Heart right ventricle (tissue), 16 donors: ENCODE measurements at regions of chr20 and their contacts with region 1.

Region 1: GRCh38 chr20:25525295-25526266 is 59.8 kb downstream of the NINL start:
- DNase-seq: no peak
- ATAC-seq: peak in 1 of 8 donors; percentile 42
- H3K4me3 ChIP-seq: no peak overlapping the region
- H3K27ac ChIP-seq: no peak overlapping the region
- H3K4me1 ChIP-seq: no peaks in the 10 kb centered on the region
- H3K27me3 ChIP-seq: no peaks in the 10 kb centered on the region
- CTCF ChIP-seq: no peak

Region 2: GRCh38 chr20:24651171-24651975 is 874.2 kb before region 1 on chr20:
- intact Hi-C with region 1: no loop called
- DNase-seq: no peak
- ATAC-seq: no peak
- H3K4me3 ChIP-seq: no peak overlapping the region
- H3K27ac ChIP-seq: no peak overlapping the region
- H3K4me1 ChIP-seq: peaks cover 0 to 8% (median 0%) of the 10 kb centered on the region in 9 donors
- H3K27me3 ChIP-seq: no peaks in the 10 kb centered on the region
- CTCF ChIP-seq: no peak

Region 3: GRCh38 chr20:25481235-25481915 is 44.2 kb before region 1 on chr20:
- intact Hi-C with region 1: no loop called
- DNase-seq: no peak
- ATAC-seq: no peak
- H3K4me3 ChIP-seq: no peak overlapping the region
- H3K27ac ChIP-seq: no peak overlapping the region
- H3K4me1 ChIP-seq: peaks cover 0 to 16% (median 4%) of the 10 kb centered on the region in 9 donors
- H3K27me3 ChIP-seq: no peaks in the 10 kb centered on the region
- CTCF ChIP-seq: no peak

Region 4: GRCh38 chr20:25495189-25495824 is 30.3 kb before region 1 on chr20:
- intact Hi-C with region 1: no loop called
- DNase-seq: no peak
- ATAC-seq: no peak
- H3K4me3 ChIP-seq: no peak overlapping the region
- H3K27ac ChIP-seq: no peak overlapping the region
- H3K4me1 ChIP-seq: no peaks in the 10 kb centered on the region
- H3K27me3 ChIP-seq: no peaks in the 10 kb centered on the region
- CTCF ChIP-seq: no peak

Region 5: DNA sequence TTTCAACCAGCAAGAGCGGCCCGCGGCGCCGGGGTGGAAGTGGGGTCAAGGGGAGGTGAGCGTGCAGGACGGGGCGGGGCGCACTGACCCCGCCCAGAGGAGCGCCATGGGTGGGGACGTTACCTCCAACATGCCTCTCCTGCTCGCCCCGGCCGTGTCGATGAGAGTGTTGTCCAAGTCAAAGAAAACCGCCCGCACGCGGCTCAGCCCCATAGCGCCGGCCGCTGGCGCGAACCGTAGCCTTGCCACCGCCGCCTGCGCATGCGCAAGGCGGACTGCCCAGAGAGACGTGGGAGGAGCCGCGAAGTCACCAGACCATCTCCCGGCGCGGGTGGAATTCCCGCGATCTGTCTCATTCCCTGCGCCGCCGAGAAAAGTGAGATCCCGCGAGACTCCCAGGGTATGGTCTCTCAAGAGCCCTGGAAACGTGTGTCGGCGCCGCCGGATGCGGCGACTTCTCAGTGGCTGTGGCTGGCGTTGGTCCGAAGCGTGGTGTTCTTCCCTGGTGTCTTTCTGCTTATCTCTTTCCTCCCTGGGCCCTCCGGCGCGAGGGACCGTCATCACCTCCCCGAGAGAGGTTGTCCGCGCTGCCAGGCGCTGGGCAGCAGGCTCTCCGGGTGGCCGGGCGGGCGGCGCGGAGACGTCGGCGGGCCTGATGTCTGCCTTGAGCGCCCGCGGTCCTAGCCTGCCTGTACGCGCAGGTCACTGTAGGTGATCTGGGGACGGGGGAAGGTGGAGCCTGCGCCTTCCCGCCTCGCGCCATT is 98.3 kb after region 1 on chr20 and contains the start of gene NANP:
- intact Hi-C with region 1: loop called in 1 of 10 experiments (anchors 5 kb)
- DNase-seq: peak; percentile 96 to 97
- ATAC-seq: peak; percentile 94 to 97 (median 96)
- H3K4me3 ChIP-seq: peak within 1 kb of the TSS; percentile 87 to 98 (median 92)
- H3K27ac ChIP-seq: peak within 1 kb of the TSS; percentile 62 to 97 (median 90)
- H3K4me1 ChIP-seq: peaks cover 0 to 26% (median 17%) of the 10 kb centered on the region in 9 donors
- H3K27me3 ChIP-seq: no peaks in the 10 kb centered on the region
- CTCF ChIP-seq: peak in 3 of 9 donors; percentile 6 to 24 (median 19)
- total RNA-seq, gene NANP: 1.9 to 6.2 (median 3.0) TPM